Adrenal gland (tissue), 19 donors: ENCODE measurements at regions of chr3 and their contacts with region 1.

Region 1: GRCh38 chr3:58532794-58533220 is 4.2 kb downstream of the ACOX2 start:
- DNase-seq: peak; percentile 76 to 87 (median 79)
- H3K4me3 ChIP-seq: no peak overlapping the region
- H3K27ac ChIP-seq: peak overlapping the region in 1 of 5 donors; percentile 36
- H3K4me1 ChIP-seq: peaks cover 18 to 30% of the 10 kb centered on the region in 2 donors
- H3K27me3 ChIP-seq: no peaks in the 10 kb centered on the region
- CTCF ChIP-seq: peak; percentile 85 to 94 (median 93)
- POLR2A ChIP-seq: no peak

Region 2: DNA sequence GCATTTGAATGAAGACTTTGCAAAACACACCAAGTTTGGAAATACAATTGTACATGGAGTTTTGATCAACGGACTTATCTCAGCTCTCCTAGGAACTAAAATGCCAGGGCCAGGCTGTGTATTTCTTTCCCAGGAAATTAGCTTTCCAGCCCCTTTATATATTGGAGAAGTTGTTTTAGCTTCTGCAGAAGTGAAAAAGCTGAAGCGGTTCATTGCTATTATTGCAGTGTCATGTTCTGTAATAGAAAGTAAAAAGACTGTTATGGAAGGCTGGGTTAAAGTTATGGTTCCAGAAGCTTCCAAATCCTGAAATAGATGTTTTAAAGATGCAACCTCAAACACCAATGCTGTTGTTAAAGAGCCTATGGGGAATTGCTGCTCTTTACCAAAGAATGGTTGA is 215.0 kb before region 1 on chr3:
- intact Hi-C with region 1: loop called (anchors 5 to 10 kb)
- DNase-seq: no peak
- H3K4me3 ChIP-seq: no peak overlapping the region
- H3K27ac ChIP-seq: no peak overlapping the region
- H3K4me1 ChIP-seq: no peaks in the 10 kb centered on the region
- H3K27me3 ChIP-seq: no peaks in the 10 kb centered on the region
- CTCF ChIP-seq: no peak
- POLR2A ChIP-seq: no peak

Region 3: GRCh38 chr3:58324391-58325390 is 208.1 kb before region 1 on chr3:
- intact Hi-C with region 1: loop called (anchors 5 to 10 kb)
- DNase-seq: no peak
- H3K4me3 ChIP-seq: no peak overlapping the region
- H3K27ac ChIP-seq: peak overlapping the region in 4 of 5 donors; percentile 13 to 77 (median 46)
- H3K4me1 ChIP-seq: peaks cover 17 to 32% of the 10 kb centered on the region in 2 donors
- H3K27me3 ChIP-seq: no peaks in the 10 kb centered on the region
- CTCF ChIP-seq: no peak
- POLR2A ChIP-seq: no peak

Region 4: GRCh38 chr3:58419780-58420507 is 112.9 kb before region 1 on chr3:
- intact Hi-C with region 1: loop called in 1 of 2 experiments (anchors 10 kb)
- DNase-seq: peak in 1 of 7 donors; percentile 31
- H3K4me3 ChIP-seq: no peak overlapping the region
- H3K27ac ChIP-seq: peak overlapping the region in 3 of 5 donors; percentile 8 to 45 (median 42)
- H3K4me1 ChIP-seq: peaks cover 8 to 10% of the 10 kb centered on the region in 2 donors
- H3K27me3 ChIP-seq: no peaks in the 10 kb centered on the region
- CTCF ChIP-seq: peak in 1 of 6 experiments; percentile 9
- POLR2A ChIP-seq: no peak

Region 5: GRCh38 chr3:58463181-58463941 is 69.4 kb before region 1 on chr3:
- intact Hi-C with region 1: loop called (anchors 10 kb)
- DNase-seq: peak; percentile 71 to 89 (median 86)
- H3K4me3 ChIP-seq: peak overlapping the region in 2 of 4 donors; percentile 10 to 36
- H3K27ac ChIP-seq: no peak overlapping the region
- H3K4me1 ChIP-seq: no peaks in the 10 kb centered on the region
- H3K27me3 ChIP-seq: no peaks in the 10 kb centered on the region
- CTCF ChIP-seq: peak; percentile 63 to 78 (median 70)
- POLR2A ChIP-seq: no peak